ENCODE measurements at regions of chr22 and their contacts with region 1.

Region 1: GRCh38 chr22:31977141-31977841 is 33.0 kb downstream of the YWHAH start:
- DNase-seq: peak; percentile 82
- H3K4me3 ChIP-seq: no peak overlapping the region; a peak in 1 of 4 replicates
- H3K27ac ChIP-seq: no peak overlapping the region
- H3K4me1 ChIP-seq: peaks cover 0 to 6% of the 10 kb centered on the region in 2 experiments; a peak in 1 of 4 replicates
- H3K27me3 ChIP-seq: no peaks in the 10 kb centered on the region
- CTCF ChIP-seq: peak; percentile 79
- EP300 ChIP-seq: no peak
- RAD21 ChIP-seq: peak; percentile 94

Region 2: DNA sequence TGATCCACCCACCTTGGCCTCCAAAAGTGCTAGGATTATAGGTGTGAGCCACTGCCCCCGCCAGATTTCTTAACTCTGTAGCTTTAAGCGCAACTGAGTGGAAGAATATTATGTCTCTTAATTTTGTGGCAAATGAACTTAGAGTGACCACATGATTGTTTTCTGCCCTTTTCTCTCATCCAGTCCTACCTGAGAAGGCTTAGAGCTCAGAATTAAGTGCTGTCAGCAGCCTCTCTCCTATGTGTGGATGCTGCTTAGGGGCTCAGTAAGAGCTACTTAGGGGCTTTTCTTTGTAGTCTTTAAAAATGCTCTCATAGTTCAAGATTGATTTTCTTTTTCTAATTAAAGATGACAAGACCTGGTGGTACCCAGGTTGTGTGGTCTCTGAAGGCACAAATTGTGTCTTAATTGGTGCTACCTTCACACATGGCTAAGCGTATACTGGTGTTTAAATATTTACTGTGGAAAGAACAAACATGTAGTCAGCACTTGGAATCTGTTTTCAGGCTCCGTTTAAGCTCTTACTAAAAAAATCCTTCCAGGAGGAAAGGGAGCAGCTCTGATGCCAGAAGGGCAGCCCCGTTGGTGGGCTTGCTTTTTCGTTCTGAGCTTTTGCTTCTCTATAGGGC is 164.2 kb before region 1 on chr22:
- CTCF ChIA-PET with region 1: no interaction called
- POLR2A ChIA-PET with region 1: no interaction called
- DNase-seq: no peak
- H3K4me3 ChIP-seq: no peak overlapping the region
- H3K27ac ChIP-seq: no peak overlapping the region
- H3K4me1 ChIP-seq: no peaks in the 10 kb centered on the region
- H3K27me3 ChIP-seq: no peaks in the 10 kb centered on the region
- CTCF ChIP-seq: no peak
- EP300 ChIP-seq: no peak
- RAD21 ChIP-seq: no peak

Region 3: GRCh38 chr22:31935966-31936635 is 41.2 kb before region 1 on chr22:
- CTCF ChIA-PET with region 1: no interaction called
- POLR2A ChIA-PET with region 1: no interaction called
- DNase-seq: no peak
- H3K4me3 ChIP-seq: no peak overlapping the region
- H3K27ac ChIP-seq: no peak overlapping the region
- H3K4me1 ChIP-seq: peaks cover 0 to 5% of the 10 kb centered on the region in 2 experiments; a peak in 1 of 4 replicates
- H3K27me3 ChIP-seq: no peaks in the 10 kb centered on the region
- CTCF ChIP-seq: no peak
- EP300 ChIP-seq: no peak
- RAD21 ChIP-seq: no peak

Region 4: DNA sequence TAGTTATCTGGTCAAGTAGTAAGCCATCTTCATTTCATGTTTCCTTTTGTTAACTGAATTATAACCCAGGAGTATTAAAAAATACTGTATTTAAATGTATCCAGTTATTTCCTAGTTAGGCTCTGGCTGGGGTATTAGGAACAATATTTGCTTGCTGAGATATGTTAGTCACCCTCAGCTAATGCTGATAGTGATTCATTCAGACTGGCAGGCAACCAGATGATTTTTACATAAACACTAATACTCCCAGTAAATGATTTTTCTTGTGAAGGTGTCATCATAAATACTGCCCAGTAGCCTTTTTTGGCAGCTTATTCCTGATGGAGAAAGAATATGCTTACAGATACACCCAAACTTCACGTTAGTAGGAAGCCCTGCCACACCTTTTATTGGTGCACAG is 24.8 kb before region 1 on chr22:
- CTCF ChIA-PET with region 1: interaction called, 10 read pairs
- POLR2A ChIA-PET with region 1: no interaction called
- DNase-seq: no peak
- H3K4me3 ChIP-seq: no peak overlapping the region
- H3K27ac ChIP-seq: peak overlapping the region in 1 of 2 experiments; percentile 77; a peak in 2 of 4 replicates
- H3K4me1 ChIP-seq: peaks cover 11 to 33% of the 10 kb centered on the region in 2 experiments; a peak in 3 of 4 replicates
- H3K27me3 ChIP-seq: no peaks in the 10 kb centered on the region
- CTCF ChIP-seq: no peak
- EP300 ChIP-seq: peak in 1 of 2 experiments; percentile 29; a peak in 1 of 4 replicates
- RAD21 ChIP-seq: no peak

Region 5: DNA sequence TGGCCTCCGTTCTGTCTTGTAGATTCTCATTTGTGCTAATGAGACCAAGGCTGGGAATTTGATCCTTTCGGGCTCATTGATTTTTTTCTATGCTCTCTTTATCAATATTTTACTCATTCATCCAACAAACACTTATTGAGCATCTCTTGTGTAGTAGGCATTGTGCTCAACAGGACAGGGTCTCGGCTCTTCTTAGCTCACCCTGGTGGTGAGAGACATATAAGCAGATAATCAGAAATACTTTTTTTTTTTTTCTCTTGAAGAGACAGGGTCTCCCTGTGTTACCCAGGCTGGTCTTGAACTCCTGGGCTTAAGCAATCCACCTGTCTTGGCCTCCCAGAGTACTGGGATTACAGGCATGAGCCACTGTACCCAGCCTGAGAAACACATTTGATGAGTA is 17.8 kb after region 1 on chr22:
- CTCF ChIA-PET with region 1: interaction called, 18 read pairs
- POLR2A ChIA-PET with region 1: no interaction called
- DNase-seq: no peak
- H3K4me3 ChIP-seq: no peak overlapping the region
- H3K27ac ChIP-seq: no peak overlapping the region
- H3K4me1 ChIP-seq: no peaks in the 10 kb centered on the region
- H3K27me3 ChIP-seq: 0 out of 2 replicates have a peak, but pooled peaks cover 9% of the 10 kb centered on the region
- CTCF ChIP-seq: peak; percentile 37
- EP300 ChIP-seq: no peak
- RAD21 ChIP-seq: no peak

Region 6: GRCh38 chr22:32080904-32081303 is 103.6 kb after region 1 on chr22:
- CTCF ChIA-PET with region 1: interaction called, 211 read pairs
- POLR2A ChIA-PET with region 1: interaction called, 3 read pairs
- DNase-seq: peak; percentile 73
- H3K4me3 ChIP-seq: no peak overlapping the region; a peak in 1 of 4 replicates
- H3K27ac ChIP-seq: no peak overlapping the region
- H3K4me1 ChIP-seq: no peaks in the 10 kb centered on the region
- H3K27me3 ChIP-seq: peaks cover 6% of the 10 kb centered on the region; the same call in 1 of the 2 replicates
- CTCF ChIP-seq: peak; percentile 76
- EP300 ChIP-seq: no peak
- RAD21 ChIP-seq: peak; percentile 89

Region 7: DNA sequence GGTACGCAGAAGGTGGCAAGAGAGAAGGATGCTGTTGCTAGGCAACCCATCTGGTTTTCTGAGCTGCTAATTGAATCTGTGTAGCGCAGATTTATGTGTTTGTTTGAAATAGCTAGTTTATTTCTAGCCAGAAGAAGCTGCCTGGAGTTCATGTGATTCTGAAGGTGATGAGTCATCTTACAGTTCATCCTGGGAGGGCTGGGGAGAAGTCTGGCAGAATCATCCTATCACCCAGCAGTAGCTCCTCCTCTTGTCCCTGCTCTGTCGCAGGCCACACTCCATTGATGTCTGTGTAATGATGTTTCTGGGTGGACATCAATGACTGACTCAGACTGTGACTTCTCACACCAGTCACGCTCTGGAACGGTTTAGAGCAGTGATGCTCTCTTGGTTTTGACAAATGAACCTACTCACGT is 492.5 kb after region 1 on chr22:
- CTCF ChIA-PET with region 1: interaction called, 10 read pairs
- POLR2A ChIA-PET with region 1: no interaction called
- DNase-seq: peak; percentile 74
- H3K4me3 ChIP-seq: no peak overlapping the region
- H3K27ac ChIP-seq: peak overlapping the region; percentile 52 to 93; a peak in 3 of 4 replicates
- H3K4me1 ChIP-seq: peaks cover 5 to 22% of the 10 kb centered on the region in 2 experiments; a peak in 3 of 4 replicates
- H3K27me3 ChIP-seq: no peaks in the 10 kb centered on the region
- CTCF ChIP-seq: no peak
- EP300 ChIP-seq: peak in 1 of 2 experiments; percentile 82; a peak in 2 of 4 replicates
- RAD21 ChIP-seq: no peak